ENCODE measurements at regions of chr3 and their contacts with region 1.

Region 1: DNA sequence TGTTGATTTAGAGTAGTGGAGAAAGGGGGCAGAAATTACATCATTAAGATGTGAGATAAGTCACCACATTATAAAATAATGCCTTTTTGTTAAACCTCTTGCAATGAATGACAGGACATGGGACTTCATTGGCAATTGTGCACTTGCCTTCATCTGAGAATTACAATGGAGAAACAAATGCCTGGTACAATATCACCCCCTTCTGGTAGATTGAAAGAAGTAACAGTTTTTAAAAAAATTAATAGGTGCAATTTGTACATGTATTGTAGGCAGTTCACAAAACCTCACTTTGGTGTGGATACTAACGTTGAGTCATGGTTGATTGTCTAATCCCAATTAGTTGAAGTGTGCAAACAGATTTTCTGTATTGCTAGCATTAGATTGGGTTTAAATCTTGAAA is 4.6 kb upstream of the P2RY14 start:
- DNase-seq: no peak
- ATAC-seq: peak; percentile 74

Region 2: DNA sequence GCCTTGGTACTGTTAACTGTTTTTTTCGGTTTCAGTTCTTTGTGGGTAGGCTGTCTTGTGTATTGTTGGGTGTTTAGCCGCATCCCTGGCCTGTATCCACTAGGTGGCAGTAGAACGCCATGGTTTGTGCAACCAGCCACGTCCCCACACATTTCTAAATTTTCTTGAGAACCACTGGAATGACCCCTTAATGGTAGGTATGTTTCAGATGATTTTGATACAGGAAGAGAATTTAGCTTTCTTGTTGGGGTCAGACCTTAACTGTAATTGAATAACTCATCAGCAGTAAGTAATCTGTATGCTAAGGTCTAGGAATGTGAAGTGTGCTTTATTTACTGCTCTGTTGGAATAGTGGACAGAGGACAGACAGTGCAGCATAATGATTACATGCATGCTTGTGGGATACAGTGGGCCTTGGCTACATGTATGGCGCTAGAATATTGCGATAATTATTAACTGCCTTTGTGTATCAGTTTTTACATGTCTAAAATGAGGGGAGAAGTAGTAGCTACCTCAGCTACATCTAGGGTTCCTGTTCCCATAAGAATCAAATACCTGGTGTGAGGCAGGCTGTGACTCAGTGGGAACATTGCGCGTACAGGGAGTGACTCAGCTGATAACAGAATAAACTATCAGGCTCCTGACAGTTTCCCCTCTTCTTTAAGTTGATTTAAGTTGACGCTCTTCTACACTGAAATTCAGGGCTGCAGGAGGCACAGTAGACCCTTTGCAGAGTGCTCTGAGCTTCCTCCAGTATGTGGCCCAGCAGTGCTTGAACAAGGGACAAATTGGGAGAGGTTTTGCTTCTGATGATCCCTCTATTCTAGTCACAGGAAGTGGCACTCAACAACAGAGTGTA is 54.9 kb before region 1 on chr3:
- intact Hi-C with region 1: loop called (anchors 10 kb)
- DNase-seq: peak; percentile 89
- ATAC-seq: peak; percentile 93

Measured in sciatic nerve (tissue), 2 donors.